CD4-positive, alpha-beta memory T cell (primary cell): ENCODE measurements at regions of chr1 and their contacts with region 1.

Region 1: DNA sequence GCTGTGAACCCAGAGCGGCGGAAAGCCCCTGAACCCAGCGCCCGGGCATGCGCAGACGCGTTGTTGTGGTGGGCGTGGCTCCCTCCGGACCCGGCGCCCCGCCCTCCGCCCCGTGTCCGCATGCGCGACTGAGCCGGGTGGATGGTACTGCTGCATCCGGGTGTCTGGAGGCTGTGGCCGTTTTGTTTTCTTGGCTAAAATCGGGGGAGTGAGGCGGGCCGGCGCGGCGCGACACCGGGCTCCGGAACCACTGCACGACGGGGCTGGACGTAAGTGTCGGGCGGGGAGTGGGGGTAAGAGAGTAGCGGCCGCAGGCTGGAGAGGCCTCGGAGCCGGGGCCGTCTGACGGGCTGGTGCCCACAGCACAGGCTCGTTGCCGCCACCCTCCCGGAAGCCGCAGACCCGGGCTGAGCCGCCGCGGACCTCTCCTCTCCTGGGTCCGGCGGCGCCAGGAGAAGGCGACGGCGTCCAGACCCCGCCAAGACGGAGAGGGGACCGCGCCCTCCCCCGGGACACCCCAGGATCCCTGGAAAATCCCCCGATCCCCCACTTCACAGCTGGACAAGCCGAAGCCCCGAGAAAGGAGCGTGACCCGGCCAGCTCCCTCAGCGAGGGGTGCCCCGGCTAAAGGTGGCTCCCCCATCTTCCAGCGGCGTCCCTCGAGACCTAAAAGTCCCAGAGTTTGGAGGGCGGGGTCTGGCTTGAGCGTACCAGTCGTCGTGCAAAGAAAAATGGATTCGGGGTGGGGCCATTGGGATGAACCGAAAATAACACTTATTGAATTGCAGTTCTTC is at the start of gene TMEM50A:
- DNase-seq: peak; percentile 89 to 94 (median 93)
- H3K4me3 ChIP-seq: peak within 1 kb of the TSS; percentile 52 to 88
- H3K4me3 Mint-ChIP-seq: peak within 1 kb of the TSS; percentile 93 to 98 (median 95)
- H3K27ac ChIP-seq: peak within 1 kb of the TSS; percentile 98
- H3K27ac Mint-ChIP-seq: peak within 1 kb of the TSS; percentile 89 to 98 (median 94)
- H3K4me1 ChIP-seq: peaks cover 37% of the 10 kb centered on the region
- H3K4me1 Mint-ChIP-seq: peaks cover 18 to 58% (median 39%) of the 10 kb centered on the region in 4 donors
- H3K27me3 ChIP-seq: no peaks in the 10 kb centered on the region
- H3K27me3 Mint-ChIP-seq: no peaks in the 10 kb centered on the region
- total RNA-seq, gene TMEM50A: 90.9 to 95.3 TPM

Region 2: GRCh38 chr1:23718482-23718881 is 1619.9 kb before region 1 on chr1:
- CTCF ChIA-PET with region 1: no interaction called
- POLR2A ChIA-PET with region 1: no interaction called
- intact Hi-C with region 1: no loop called
- DNase-seq: no peak
- H3K4me3 ChIP-seq: no peak overlapping the region
- H3K4me3 Mint-ChIP-seq: no peak overlapping the region
- H3K27ac ChIP-seq: no peak overlapping the region
- H3K27ac Mint-ChIP-seq: peak overlapping the region in 3 of 7 donors; percentile 15 to 53 (median 37)
- H3K4me1 ChIP-seq: peaks cover 8% of the 10 kb centered on the region
- H3K4me1 Mint-ChIP-seq: peaks cover 9 to 11% (median 9%) of the 10 kb centered on the region in 4 donors
- H3K27me3 ChIP-seq: no peaks in the 10 kb centered on the region
- H3K27me3 Mint-ChIP-seq: no peaks in the 10 kb centered on the region

Region 3: DNA sequence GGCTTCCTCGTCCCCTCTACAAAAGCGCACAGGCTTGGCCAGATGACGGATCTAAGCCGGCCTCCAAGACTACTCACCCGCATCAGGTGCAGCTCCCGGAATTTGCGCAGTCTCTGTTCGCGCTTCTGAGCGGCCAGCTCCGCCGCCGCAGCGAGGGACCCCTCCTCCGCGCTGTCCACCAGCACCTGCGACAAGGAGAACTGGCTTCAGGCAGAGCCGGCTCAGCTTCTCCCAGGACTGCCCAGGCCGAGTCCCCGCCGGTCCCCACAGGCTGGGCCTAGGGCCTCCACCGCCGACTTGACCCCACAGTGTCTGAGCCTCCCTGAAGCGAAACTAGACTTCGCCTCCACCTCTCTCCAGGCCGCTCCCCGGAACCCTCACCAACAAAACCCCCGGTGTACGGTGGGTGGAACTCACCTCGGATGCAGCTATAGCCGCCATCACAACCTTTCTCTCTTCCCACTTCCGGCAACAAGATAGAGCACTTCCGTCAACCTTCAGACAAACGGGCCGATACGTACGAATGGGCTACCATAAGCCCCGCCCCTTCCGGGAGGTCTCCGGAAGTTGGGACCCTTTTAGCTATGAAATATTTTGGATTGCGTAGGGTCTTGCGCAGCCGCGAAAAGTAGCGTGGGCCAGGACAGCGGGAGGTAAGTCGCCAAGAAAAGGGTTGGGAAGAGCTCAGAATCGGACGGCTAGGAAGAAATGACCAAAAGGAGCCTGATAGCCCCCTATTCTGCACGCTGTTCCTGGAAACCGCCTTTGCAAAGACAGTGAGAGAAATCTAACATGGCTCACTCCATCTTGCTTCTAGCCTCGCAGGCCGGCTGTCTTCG is 106.1 kb before region 1 on chr1 and contains the start of gene SYF2:
- CTCF ChIA-PET with region 1: no interaction called
- POLR2A ChIA-PET with region 1: interaction called, 18 read pairs
- intact Hi-C with region 1: loop called (anchors 2 kb)
- DNase-seq: peak; percentile 88 to 95 (median 91)
- H3K4me3 ChIP-seq: peak within 1 kb of the TSS; percentile 80 to 83
- H3K4me3 Mint-ChIP-seq: no peak within 1 kb of the TSS
- H3K27ac ChIP-seq: peak within 1 kb of the TSS; percentile 94
- H3K27ac Mint-ChIP-seq: no peak within 1 kb of the TSS
- H3K4me1 ChIP-seq: peaks cover 27% of the 10 kb centered on the region
- H3K4me1 Mint-ChIP-seq: peaks cover 13 to 26% (median 15%) of the 10 kb centered on the region in 4 donors
- H3K27me3 ChIP-seq: no peaks in the 10 kb centered on the region
- H3K27me3 Mint-ChIP-seq: no peaks in the 10 kb centered on the region
- total RNA-seq, gene SYF2: 64.3 to 66.8 TPM

Region 4: DNA sequence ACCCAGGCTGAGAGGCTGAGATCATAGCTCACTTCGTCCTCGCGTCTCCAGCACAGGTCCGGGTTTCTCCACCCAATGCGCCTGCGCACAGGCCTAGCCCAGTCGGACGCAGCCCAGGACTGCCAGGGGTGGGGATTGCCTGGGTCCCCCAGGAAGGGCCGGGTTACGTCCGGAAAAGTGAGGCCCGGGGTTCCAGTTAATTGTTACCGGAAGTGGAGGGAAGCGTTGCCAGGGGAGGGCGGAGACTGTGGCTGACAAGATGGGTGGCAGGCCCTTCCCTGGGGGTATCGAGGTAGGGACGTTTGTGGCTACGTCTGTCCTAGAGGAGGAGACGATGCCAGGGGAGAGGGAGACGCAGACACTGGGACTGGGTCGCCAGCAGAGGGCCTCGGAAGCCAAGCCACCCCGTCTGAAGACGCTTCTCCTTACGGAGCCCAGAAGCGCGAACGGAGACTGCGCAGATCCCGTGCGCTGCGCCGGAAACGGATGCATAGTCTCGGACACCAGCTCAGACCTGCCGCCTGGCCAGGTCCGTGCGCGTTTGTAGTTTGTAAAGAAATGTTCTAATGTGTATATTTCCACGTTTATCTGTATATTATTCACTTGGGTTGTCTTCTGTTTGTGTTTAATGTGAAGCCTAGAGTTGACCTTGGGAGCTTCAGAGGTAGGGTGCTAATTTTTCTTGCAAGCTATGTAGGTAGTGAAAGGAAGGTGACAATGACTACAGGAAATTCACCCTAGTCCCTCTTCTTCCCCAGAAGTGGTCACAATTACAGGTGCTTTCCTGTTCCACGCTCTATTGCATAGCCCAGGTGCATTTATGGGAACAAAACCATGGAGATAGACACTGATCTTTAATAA is 98.5 kb before region 1 on chr1:
- CTCF ChIA-PET with region 1: no interaction called
- POLR2A ChIA-PET with region 1: interaction called, 10 read pairs
- intact Hi-C with region 1: no loop called
- DNase-seq: peak; percentile 84 to 92 (median 84)
- H3K4me3 ChIP-seq: peak overlapping the region; percentile 19 to 69
- H3K4me3 Mint-ChIP-seq: peak overlapping the region; percentile 88 to 92 (median 90)
- H3K27ac ChIP-seq: peak overlapping the region; percentile 77
- H3K27ac Mint-ChIP-seq: peak overlapping the region; percentile 94 to 100 (median 96)
- H3K4me1 ChIP-seq: peaks cover 65% of the 10 kb centered on the region
- H3K4me1 Mint-ChIP-seq: peaks cover 32 to 63% (median 44%) of the 10 kb centered on the region in 4 donors
- H3K27me3 ChIP-seq: no peaks in the 10 kb centered on the region
- H3K27me3 Mint-ChIP-seq: no peaks in the 10 kb centered on the region

Region 5: DNA sequence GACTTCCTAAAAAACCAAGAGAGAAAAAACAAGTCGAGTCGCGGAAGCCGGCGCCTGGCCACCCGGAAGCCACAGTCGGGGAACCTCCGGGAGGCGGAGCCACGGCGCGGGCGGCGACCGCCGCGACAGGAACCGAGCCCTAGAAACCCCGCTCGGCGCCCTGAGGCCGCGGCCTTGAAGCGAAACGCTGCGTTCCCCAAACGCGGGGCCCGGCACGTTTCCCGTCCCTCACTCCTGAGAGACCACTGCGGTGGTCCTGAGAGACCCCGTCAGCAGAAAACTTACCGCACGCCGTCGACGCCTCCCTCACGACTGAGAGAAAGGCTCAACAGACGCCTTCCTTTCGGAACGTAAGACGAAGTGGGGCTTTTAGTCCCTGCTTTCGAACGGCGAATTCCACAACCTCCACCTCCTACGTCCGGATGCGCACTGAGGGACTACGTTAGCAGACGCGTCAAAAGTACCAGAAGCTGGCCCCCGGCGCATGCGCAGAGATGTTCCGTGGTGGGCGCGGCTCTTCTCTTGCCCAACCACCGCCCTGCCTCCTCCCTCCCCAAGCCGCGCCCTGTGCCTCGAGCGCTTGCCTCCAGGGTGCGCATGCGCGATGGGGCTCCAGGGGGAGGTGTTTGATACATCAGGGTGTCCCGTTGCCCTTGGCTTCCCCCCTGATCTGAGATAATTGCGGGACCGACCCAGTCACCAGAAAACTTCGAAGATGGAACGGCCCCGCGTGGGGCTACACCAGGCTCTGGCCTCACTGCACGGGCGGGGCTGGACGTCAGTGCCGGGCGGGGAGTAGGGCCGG is 91.2 kb before region 1 on chr1 and contains the start of gene RSRP1:
- CTCF ChIA-PET with region 1: no interaction called
- POLR2A ChIA-PET with region 1: interaction called, 18 read pairs
- intact Hi-C with region 1: loop called (anchors 2 kb)
- DNase-seq: peak; percentile 99 to 100 (median 99)
- H3K4me3 ChIP-seq: peak within 1 kb of the TSS; percentile 89 to 98
- H3K4me3 Mint-ChIP-seq: peak within 1 kb of the TSS; percentile 96 to 100 (median 98)
- H3K27ac ChIP-seq: peak within 1 kb of the TSS; percentile 97
- H3K27ac Mint-ChIP-seq: peak within 1 kb of the TSS; percentile 99 to 100 (median 100)
- H3K4me1 ChIP-seq: peaks cover 45% of the 10 kb centered on the region
- H3K4me1 Mint-ChIP-seq: peaks cover 25 to 66% (median 39%) of the 10 kb centered on the region in 4 donors
- H3K27me3 ChIP-seq: no peaks in the 10 kb centered on the region
- H3K27me3 Mint-ChIP-seq: peaks cover 0 to 2% of the 10 kb centered on the region in 2 donors
- total RNA-seq, gene RSRP1: 470 to 494 TPM